PC-3 (cell line): ENCODE measurements at regions of chr10 and their contacts with region 1.

Region 1: GRCh38 chr10:24866604-24867583 is 85.5 kb downstream of the PRTFDC1 start:
- DNase-seq: peak; percentile 57
- ATAC-seq: peak; percentile 41
- H3K4me3 ChIP-seq: no peak overlapping the region
- H3K27ac ChIP-seq: peak overlapping the region; percentile 34
- H3K4me1 ChIP-seq: peaks cover 45% of the 10 kb centered on the region
- H3K27me3 ChIP-seq: no peaks in the 10 kb centered on the region
- CTCF ChIP-seq: no peak

Region 2: DNA sequence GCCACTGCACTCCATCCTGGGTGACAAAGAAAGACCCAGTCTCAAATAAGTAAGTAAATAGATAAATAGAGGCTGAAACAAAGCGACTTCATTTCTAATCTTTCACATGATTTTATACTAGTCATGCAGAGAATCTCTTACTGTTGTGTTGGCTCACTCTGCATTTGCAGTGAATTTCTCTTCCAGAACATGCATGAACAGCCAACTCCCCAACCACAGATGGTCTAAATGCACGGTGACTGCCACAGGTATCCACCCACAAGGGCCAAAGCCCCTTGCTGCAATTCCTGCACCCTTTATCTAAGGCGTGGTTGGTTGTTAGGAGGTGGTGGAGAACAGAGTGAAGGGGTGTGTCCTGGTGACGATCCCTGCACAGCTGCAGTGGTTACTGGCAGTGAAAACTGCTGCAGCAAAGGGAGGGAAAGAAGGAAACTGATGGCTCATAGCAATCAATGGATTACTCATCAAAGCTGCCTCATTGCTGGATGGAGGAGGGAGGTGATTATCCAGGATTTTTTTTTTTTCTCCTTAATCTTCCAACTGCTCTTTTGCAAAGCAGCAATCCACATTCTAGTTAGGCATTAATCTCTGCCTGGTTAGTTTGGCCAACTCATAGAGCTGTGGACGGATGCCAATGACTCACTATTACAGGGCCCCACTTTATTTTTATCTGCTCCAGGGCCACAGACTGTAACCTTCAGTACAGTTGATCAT is 34.9 kb after region 1 on chr10:
- CTCF ChIA-PET with region 1: no interaction called
- POLR2A ChIA-PET with region 1: no interaction called
- intact Hi-C with region 1: loop called (anchors 5 kb)
- DNase-seq: peak; percentile 93
- ATAC-seq: peak; percentile 91
- H3K4me3 ChIP-seq: peak overlapping the region; percentile 20; the same call in 1 of the 2 replicates
- H3K27ac ChIP-seq: peak overlapping the region; percentile 93
- H3K4me1 ChIP-seq: peaks cover 27% of the 10 kb centered on the region
- H3K27me3 ChIP-seq: no peaks in the 10 kb centered on the region
- CTCF ChIP-seq: no peak

Region 3: GRCh38 chr10:24947304-24948097 is 80.6 kb after region 1 on chr10:
- CTCF ChIA-PET with region 1: interaction called, 5 read pairs
- POLR2A ChIA-PET with region 1: no interaction called
- intact Hi-C with region 1: loop called (anchors 5 kb)
- DNase-seq: peak; percentile 67
- ATAC-seq: peak; percentile 71
- H3K4me3 ChIP-seq: no peak overlapping the region
- H3K27ac ChIP-seq: peak overlapping the region; percentile 83
- H3K4me1 ChIP-seq: peaks cover 42% of the 10 kb centered on the region
- H3K27me3 ChIP-seq: no peaks in the 10 kb centered on the region
- CTCF ChIP-seq: no peak